ENCODE measurements at regions of chr3 and their contacts with region 1.

Region 1: GRCh38 chr3:73100741-73101559 is 39.5 kb downstream of the EBLN2 start:
- DNase-seq: peak; percentile 65 to 88
- ATAC-seq: peak; percentile 94

Region 2: GRCh38 chr3:73432023-73432705 is 331.2 kb after region 1 on chr3:
- intact Hi-C with region 1: loop called in 1 of 2 experiments (anchors 10 kb)
- DNase-seq: peak in 1 of 2 donors; percentile 17
- ATAC-seq: no peak

Region 3: GRCh38 chr3:73502609-73503583 is 401.9 kb after region 1 on chr3:
- intact Hi-C with region 1: loop called (anchors 2 to 5 kb)
- DNase-seq: peak; percentile 56 to 76
- ATAC-seq: peak; percentile 79

Region 4: GRCh38 chr3:73508330-73508954 is 407.5 kb after region 1 on chr3:
- intact Hi-C with region 1: loop called (anchors 2 to 5 kb)
- DNase-seq: peak; percentile 41 to 48
- ATAC-seq: peak; percentile 51

Region 5: DNA sequence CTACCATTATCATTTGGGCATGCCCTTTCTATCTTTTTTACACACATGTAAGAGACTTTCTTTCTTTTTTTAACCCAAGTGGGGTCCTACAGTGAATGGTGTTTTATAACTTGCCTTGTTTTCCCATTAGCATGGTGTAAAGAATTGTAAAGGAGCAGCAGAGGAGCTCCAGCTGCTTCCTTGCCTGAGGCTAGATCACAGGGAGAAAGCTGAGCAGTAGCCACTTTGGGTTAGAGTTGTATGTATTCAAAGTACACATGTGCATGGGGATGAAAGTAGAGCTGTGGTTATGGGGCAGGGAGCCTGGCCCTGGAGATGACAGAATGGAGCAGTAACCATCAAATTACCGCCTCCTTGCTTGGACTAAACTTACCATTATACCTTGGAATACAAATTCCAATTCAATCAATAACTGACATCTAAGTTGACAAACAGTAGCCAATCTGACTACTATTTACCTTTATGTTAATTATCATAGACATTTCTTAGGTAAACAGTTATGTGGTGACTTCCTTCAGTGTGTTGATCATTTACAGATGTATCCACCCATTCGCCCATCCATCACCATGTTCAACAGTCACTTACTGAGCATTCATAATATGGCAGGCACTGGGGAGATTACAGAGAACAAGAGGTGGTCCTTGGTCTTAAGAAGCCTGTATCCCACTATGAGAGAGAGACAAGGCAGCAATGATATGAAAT is 755.0 kb after region 1 on chr3:
- intact Hi-C with region 1: loop called in 1 of 2 experiments (anchors 10 kb)
- DNase-seq: no peak
- ATAC-seq: peak; percentile 77